BJ (cell line): ENCODE measurements at regions of chr6 and their contacts with region 1.

Region 1: GRCh38 chr6:4055420-4056041 is 23.4 kb downstream of the FAM217A start:
- DNase-seq: peak; percentile 44
- H3K4me3 ChIP-seq: no peak overlapping the region
- H3K27me3 ChIP-seq: no peaks in the 10 kb centered on the region
- CTCF ChIP-seq: peak; percentile 51

Region 2: GRCh38 chr6:4039348-4039747 is 16.2 kb before region 1 on chr6:
- CTCF ChIA-PET with region 1: interaction called, 11 read pairs
- POLR2A ChIA-PET with region 1: no interaction called
- DNase-seq: no peak
- H3K4me3 ChIP-seq: no peak overlapping the region
- H3K27me3 ChIP-seq: no peaks in the 10 kb centered on the region
- CTCF ChIP-seq: no peak

Region 3: DNA sequence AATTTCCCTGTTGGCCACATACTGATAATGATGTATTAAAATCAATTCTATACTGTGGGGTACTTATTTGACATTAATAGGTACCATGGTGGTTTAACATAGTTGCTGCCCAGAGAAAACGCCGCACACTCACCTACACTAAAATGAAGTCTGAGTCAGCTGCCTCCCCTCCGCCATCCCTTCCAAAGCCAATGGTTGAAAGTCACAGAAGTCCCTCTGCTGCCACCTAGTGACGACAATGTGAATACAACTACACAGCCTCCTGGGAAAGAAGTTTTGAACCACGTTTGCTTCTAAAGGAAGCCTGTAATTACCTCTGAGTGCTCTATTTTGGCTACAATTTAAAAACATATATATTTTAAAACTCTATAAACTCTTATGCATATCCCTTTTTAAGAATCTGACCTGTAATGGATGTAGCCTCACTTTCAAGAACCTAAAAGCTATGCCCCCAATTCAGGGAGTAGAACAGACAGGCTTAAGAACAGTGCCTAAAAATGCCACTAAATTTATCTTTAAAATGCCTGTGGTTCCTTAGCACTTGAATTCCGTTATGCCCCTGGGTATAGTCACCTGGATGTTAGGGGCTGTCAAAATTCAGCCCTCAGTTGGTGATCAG is 100.4 kb after region 1 on chr6:
- CTCF ChIA-PET with region 1: interaction called, 46 read pairs
- POLR2A ChIA-PET with region 1: no interaction called
- DNase-seq: no peak
- H3K4me3 ChIP-seq: no peak overlapping the region
- H3K27me3 ChIP-seq: peaks cover 2% of the 10 kb centered on the region
- CTCF ChIP-seq: peak; percentile 81

Region 4: DNA sequence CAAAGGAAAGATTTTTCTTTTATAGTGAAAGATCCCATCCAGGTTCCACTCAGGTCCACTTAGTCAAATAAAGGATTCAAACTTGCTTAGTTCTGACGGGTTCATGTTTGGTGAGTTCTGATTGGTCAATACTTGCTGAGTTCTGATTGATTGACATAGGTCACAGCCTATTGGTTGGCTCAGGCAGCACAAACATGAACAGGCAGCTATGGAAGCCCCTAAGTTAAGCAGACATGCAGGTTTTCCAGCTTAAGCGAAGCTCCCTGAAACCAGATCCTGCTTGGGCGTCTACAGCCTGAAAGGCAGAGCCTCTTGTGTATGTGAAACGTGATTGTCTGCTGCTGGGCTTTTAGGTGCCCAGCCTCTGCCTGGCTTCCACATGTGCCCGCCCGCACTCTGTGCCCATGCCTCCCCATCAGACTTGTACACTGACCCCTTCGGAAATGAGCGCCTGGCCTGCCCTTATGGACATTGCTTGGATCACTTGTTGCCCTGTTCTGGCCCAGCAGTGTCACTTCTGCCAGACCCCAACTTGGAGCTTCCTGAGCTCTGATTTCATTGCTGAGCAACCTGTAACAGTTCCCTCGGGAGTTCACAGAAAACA is 125.2 kb after region 1 on chr6:
- CTCF ChIA-PET with region 1: no interaction called
- POLR2A ChIA-PET with region 1: no interaction called
- DNase-seq: no peak
- H3K4me3 ChIP-seq: no peak overlapping the region
- H3K27me3 ChIP-seq: peaks cover 3% of the 10 kb centered on the region
- CTCF ChIP-seq: no peak

Region 5: DNA sequence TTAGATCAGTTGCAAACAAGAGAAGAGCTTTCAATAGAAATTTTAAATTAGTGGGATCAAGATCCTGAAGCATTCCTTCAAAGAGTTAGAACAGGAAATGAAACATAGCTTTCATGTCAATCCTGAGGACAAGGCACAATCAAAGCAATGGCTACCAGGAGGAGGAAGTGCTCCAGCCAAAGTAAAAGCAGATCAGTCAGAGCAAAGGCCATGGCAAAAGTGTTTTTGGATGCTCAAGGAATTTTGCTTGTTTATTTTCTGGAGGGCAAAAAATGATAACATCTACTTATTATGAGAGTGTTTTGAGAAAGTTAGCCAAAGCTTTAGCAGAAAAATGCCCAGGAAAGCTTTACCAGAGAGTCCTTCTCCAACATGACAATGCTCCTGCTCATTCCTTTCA is 140.8 kb after region 1 on chr6:
- CTCF ChIA-PET with region 1: no interaction called
- POLR2A ChIA-PET with region 1: no interaction called
- DNase-seq: no peak
- H3K4me3 ChIP-seq: no peak overlapping the region
- H3K27me3 ChIP-seq: no peaks in the 10 kb centered on the region
- CTCF ChIP-seq: no peak